ENCODE measurements at regions of chr5 and their contacts with region 1.

Region 1: GRCh38 chr5:44875661-44876605 is 67.2 kb downstream of the MRPS30 start:
- DNase-seq: no peak
- ATAC-seq: peak; percentile 87
- H3K4me3 Mint-ChIP-seq: peak overlapping the region; percentile 65
- H3K27ac Mint-ChIP-seq: peak overlapping the region; percentile 90
- H3K4me1 Mint-ChIP-seq: peaks cover 10% of the 10 kb centered on the region
- H3K27me3 Mint-ChIP-seq: no peaks in the 10 kb centered on the region
- CTCF ChIP-seq: no peak

Region 2: GRCh38 chr5:44808435-44809214 is 67.3 kb before region 1 on chr5 and contains the start of gene MRPS30:
- CTCF ChIA-PET with region 1: no interaction called
- POLR2A ChIA-PET with region 1: interaction called, 3 read pairs
- intact Hi-C with region 1: loop called (anchors 1 kb)
- DNase-seq: peak; percentile 72
- ATAC-seq: peak; percentile 96
- H3K4me3 Mint-ChIP-seq: peak within 1 kb of the TSS; percentile 97
- H3K27ac Mint-ChIP-seq: peak within 1 kb of the TSS; percentile 94
- H3K4me1 Mint-ChIP-seq: peaks cover 31% of the 10 kb centered on the region
- H3K27me3 Mint-ChIP-seq: peaks cover 4% of the 10 kb centered on the region
- CTCF ChIP-seq: no peak
- total RNA-seq, gene MRPS30: 41.4 and 41.8 TPM in 2 replicates

Region 3: GRCh38 chr5:44845777-44846176 is 30.2 kb before region 1 on chr5:
- CTCF ChIA-PET with region 1: no interaction called
- POLR2A ChIA-PET with region 1: no interaction called
- intact Hi-C with region 1: no loop called
- DNase-seq: no peak
- ATAC-seq: no peak
- H3K4me3 Mint-ChIP-seq: no peak overlapping the region
- H3K27ac Mint-ChIP-seq: no peak overlapping the region
- H3K4me1 Mint-ChIP-seq: no peaks in the 10 kb centered on the region
- H3K27me3 Mint-ChIP-seq: no peaks in the 10 kb centered on the region
- CTCF ChIP-seq: no peak

Region 4: GRCh38 chr5:44891116-44891515 is 15.2 kb after region 1 on chr5:
- CTCF ChIA-PET with region 1: no interaction called
- POLR2A ChIA-PET with region 1: no interaction called
- intact Hi-C with region 1: no loop called
- DNase-seq: no peak
- ATAC-seq: no peak
- H3K4me3 Mint-ChIP-seq: no peak overlapping the region
- H3K27ac Mint-ChIP-seq: no peak overlapping the region
- H3K4me1 Mint-ChIP-seq: no peaks in the 10 kb centered on the region
- H3K27me3 Mint-ChIP-seq: no peaks in the 10 kb centered on the region
- CTCF ChIP-seq: no peak

Region 5: GRCh38 chr5:44935262-44935661 is 59.3 kb after region 1 on chr5:
- CTCF ChIA-PET with region 1: no interaction called
- POLR2A ChIA-PET with region 1: no interaction called
- intact Hi-C with region 1: no loop called
- DNase-seq: no peak
- ATAC-seq: no peak
- H3K4me3 Mint-ChIP-seq: no peak overlapping the region
- H3K27ac Mint-ChIP-seq: no peak overlapping the region
- H3K4me1 Mint-ChIP-seq: no peaks in the 10 kb centered on the region
- H3K27me3 Mint-ChIP-seq: no peaks in the 10 kb centered on the region
- CTCF ChIP-seq: no peak